CD8-positive, alpha-beta T cell (primary cell): ENCODE measurements at regions of chr16 and their contacts with region 1.

Region 1: GRCh38 chr16:31873556-31874365 is at the start of gene ZNF267:
- DNase-seq: peak; percentile 84 to 96 (median 93)
- ATAC-seq: peak; percentile 71
- H3K4me3 ChIP-seq: peak within 1 kb of the TSS; percentile 90 to 92
- H3K4me3 Mint-ChIP-seq: peak within 1 kb of the TSS; percentile 96
- H3K27ac ChIP-seq: peak within 1 kb of the TSS; percentile 89 to 92
- H3K27ac Mint-ChIP-seq: peak within 1 kb of the TSS; percentile 96
- H3K4me1 ChIP-seq: peaks cover 64% of the 10 kb centered on the region
- H3K4me1 Mint-ChIP-seq: peaks cover 88% of the 10 kb centered on the region
- H3K27me3 ChIP-seq: no peaks in the 10 kb centered on the region
- H3K27me3 Mint-ChIP-seq: no peaks in the 10 kb centered on the region
- CTCF ChIP-seq: no peak
- total RNA-seq, gene ZNF267: 78.6 to 80.1 TPM

Region 2: GRCh38 chr16:30957456-30958174 is 916.1 kb before region 1 on chr16 and contains the start of gene SETD1A:
- CTCF ChIA-PET with region 1: interaction called, 11 read pairs
- POLR2A ChIA-PET with region 1: no interaction called
- intact Hi-C with region 1: loop called (anchors 10 kb)
- DNase-seq: peak; percentile 91 to 99 (median 98)
- ATAC-seq: peak; percentile 86
- H3K4me3 ChIP-seq: peak within 1 kb of the TSS; percentile 88 to 97
- H3K4me3 Mint-ChIP-seq: peak within 1 kb of the TSS; percentile 95
- H3K27ac ChIP-seq: peak within 1 kb of the TSS; percentile 93 to 98
- H3K27ac Mint-ChIP-seq: peak within 1 kb of the TSS; percentile 98
- H3K4me1 ChIP-seq: peaks cover 27% of the 10 kb centered on the region
- H3K4me1 Mint-ChIP-seq: peaks cover 31% of the 10 kb centered on the region
- H3K27me3 ChIP-seq: no peaks in the 10 kb centered on the region
- H3K27me3 Mint-ChIP-seq: no peaks in the 10 kb centered on the region
- CTCF ChIP-seq: no peak
- total RNA-seq, gene SETD1A: 43.6 to 48.3 TPM

Region 3: DNA sequence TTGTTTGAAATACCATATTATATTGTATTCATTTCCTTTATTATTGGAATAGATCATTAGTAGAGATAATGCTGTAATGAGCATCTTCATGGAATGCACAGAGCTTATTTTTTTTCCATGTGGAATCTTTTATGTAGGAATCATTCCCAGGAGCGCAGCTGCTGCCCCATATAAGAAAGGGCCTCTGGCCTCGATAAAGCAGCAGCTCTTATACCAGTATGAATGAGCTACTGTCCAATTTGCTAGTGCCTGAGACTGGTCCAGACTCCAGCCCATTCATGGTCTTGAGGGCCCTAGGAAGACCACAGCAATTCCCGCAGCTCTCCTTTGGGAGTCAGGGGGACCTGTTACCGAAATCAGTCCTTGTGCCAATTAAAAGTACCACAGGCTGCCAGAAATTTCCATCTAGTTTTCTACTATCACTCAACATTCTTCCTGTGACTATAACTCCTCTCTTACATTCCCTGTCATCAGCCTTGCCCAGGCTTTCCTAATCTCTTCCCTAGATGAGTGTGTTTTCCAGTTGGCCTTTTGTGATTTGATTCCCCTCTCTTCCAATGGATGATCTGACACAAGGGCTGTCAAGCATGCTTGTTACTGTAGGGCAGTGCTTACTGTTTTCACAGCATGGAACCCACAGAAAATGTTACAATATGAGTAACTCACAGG is 433.1 kb before region 1 on chr16:
- CTCF ChIA-PET with region 1: interaction called, 3 read pairs
- POLR2A ChIA-PET with region 1: no interaction called
- intact Hi-C with region 1: loop called in 1 of 2 experiments (anchors 10 kb)
- DNase-seq: no peak
- ATAC-seq: no peak
- H3K4me3 ChIP-seq: no peak overlapping the region
- H3K4me3 Mint-ChIP-seq: no peak overlapping the region
- H3K27ac ChIP-seq: no peak overlapping the region
- H3K27ac Mint-ChIP-seq: no peak overlapping the region
- H3K4me1 ChIP-seq: peaks cover 4% of the 10 kb centered on the region
- H3K4me1 Mint-ChIP-seq: peaks cover 6% of the 10 kb centered on the region
- H3K27me3 ChIP-seq: no peaks in the 10 kb centered on the region
- H3K27me3 Mint-ChIP-seq: no peaks in the 10 kb centered on the region
- CTCF ChIP-seq: no peak

Region 4: DNA sequence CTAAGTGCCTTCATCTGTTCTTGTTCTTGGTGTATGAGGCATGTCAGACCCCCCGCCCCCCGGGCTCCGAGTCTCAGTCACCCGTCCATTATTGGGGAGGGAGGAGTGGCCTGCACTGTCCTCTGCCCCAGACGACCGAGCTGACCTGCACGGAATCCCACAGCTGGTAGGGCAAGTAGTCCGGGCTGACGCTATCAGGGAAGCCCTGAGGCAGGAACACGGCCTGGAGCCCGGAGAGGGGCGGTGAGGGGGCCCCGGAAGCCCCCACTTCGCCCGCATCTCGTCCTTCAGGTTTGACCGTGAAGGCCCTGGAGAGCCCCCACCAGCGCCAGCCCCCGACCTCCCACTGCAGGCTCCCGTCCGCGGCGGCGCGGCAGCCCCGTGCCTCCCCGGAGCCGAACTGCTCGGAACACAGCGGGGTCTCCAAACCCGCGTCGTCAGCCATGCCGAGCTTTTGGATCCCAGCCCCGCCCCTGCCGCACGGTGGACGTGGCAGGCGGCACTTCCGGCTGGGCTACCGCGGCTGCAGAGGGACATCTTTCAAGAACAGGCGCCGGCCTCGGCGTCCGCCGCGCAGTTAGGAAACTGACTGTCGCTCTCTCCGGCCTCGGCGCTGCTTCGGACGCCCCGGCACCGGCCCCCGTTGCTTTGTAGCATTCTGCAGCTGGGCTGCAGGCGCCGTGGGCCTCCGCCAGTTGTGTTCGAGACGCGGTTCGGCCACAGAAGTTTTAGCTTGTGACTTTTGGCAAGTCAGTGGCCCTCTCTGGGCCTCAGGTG is 365.6 kb before region 1 on chr16 and contains the start of gene RUSF1:
- CTCF ChIA-PET with region 1: interaction called, 4 read pairs
- POLR2A ChIA-PET with region 1: interaction called, 5 read pairs
- intact Hi-C with region 1: loop called in 1 of 2 experiments (anchors 10 kb)
- DNase-seq: peak; percentile 57 to 90 (median 83)
- ATAC-seq: peak; percentile 88
- H3K4me3 ChIP-seq: peak within 1 kb of the TSS; percentile 80 to 94
- H3K4me3 Mint-ChIP-seq: peak within 1 kb of the TSS; percentile 86
- H3K27ac ChIP-seq: peak within 1 kb of the TSS; percentile 84 to 89
- H3K27ac Mint-ChIP-seq: peak within 1 kb of the TSS; percentile 96
- H3K4me1 ChIP-seq: peaks cover 34% of the 10 kb centered on the region
- H3K4me1 Mint-ChIP-seq: peaks cover 45% of the 10 kb centered on the region
- H3K27me3 ChIP-seq: no peaks in the 10 kb centered on the region
- H3K27me3 Mint-ChIP-seq: no peaks in the 10 kb centered on the region
- CTCF ChIP-seq: no peak
- total RNA-seq, gene RUSF1: 62.8 to 67.8 TPM

Region 5: GRCh38 chr16:31713071-31713944 is 160.5 kb before region 1 on chr16:
- CTCF ChIA-PET with region 1: interaction called, 4 read pairs
- POLR2A ChIA-PET with region 1: interaction called, 7 read pairs
- intact Hi-C with region 1: loop called (anchors 5 kb)
- DNase-seq: peak; percentile 84 to 94 (median 92)
- ATAC-seq: peak; percentile 94
- H3K4me3 ChIP-seq: peak overlapping the region; percentile 84 to 100
- H3K4me3 Mint-ChIP-seq: peak overlapping the region; percentile 98
- H3K27ac ChIP-seq: peak overlapping the region; percentile 83 to 98
- H3K27ac Mint-ChIP-seq: peak overlapping the region; percentile 97
- H3K4me1 ChIP-seq: peaks cover 50% of the 10 kb centered on the region
- H3K4me1 Mint-ChIP-seq: peaks cover 68% of the 10 kb centered on the region
- H3K27me3 ChIP-seq: no peaks in the 10 kb centered on the region
- H3K27me3 Mint-ChIP-seq: no peaks in the 10 kb centered on the region
- CTCF ChIP-seq: no peak